Mammary epithelial cell (primary cell): ENCODE measurements at regions of chr7 and their contacts with region 1.

Region 1: DNA sequence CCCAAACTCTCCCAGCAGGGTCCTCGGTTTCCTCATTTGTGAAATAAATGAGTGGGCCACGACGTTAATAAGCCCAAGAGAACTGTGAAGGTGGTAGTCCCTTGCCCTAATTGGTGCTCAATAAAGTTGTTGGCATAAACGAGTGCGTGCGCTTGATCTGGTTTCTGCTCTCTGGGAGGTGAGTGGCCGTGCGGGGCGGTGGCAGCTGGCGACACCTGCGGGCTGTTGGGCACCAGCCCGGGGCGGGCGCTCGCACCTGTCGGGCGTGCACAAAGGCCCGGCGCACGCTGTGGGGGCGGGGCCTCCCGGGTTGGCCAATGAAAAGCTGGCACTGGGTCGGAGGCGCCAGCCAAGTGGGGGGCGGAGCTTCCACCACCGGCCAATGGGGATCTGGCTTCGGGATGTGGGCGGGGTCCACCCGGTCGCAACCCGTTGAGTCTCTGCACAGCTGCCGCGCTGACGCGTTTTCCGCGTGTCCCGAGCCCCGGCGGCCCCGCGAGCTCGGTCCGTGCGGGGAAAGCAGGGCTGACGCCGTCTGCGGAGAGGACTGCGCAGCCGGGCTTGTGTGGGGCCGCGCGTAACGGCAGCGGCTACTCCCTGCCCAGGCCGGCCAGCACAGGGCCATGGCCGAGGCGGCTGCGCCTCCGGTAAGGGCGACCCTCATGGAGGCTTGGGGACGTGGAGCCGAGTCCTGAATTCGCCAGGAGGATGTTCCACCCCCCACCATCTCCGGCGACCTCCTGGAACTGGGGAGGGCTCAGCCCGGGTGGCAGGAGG is 23.0 kb downstream of the ZNF783 start:
- DNase-seq: peak; percentile 75
- H3K4me3 ChIP-seq: peak overlapping the region; percentile 17 to 53 (median 52)
- H3K27ac ChIP-seq: no peak overlapping the region
- H3K4me1 ChIP-seq: peaks cover 7% of the 10 kb centered on the region
- H3K27me3 ChIP-seq: no peaks in the 10 kb centered on the region
- CTCF ChIP-seq: no peak

Region 2: GRCh38 chr7:149229526-149229925 is 55.5 kb before region 1 on chr7:
- CTCF ChIA-PET with region 1: no interaction called
- dilution Hi-C with region 1: no loop called
- in situ Hi-C with region 1: no loop called
- intact Hi-C with region 1: no loop called
- DNase-seq: no peak
- H3K4me3 ChIP-seq: no peak overlapping the region
- H3K27ac ChIP-seq: no peak overlapping the region
- H3K4me1 ChIP-seq: peaks cover 19% of the 10 kb centered on the region
- H3K27me3 ChIP-seq: no peaks in the 10 kb centered on the region
- CTCF ChIP-seq: no peak

Region 3: DNA sequence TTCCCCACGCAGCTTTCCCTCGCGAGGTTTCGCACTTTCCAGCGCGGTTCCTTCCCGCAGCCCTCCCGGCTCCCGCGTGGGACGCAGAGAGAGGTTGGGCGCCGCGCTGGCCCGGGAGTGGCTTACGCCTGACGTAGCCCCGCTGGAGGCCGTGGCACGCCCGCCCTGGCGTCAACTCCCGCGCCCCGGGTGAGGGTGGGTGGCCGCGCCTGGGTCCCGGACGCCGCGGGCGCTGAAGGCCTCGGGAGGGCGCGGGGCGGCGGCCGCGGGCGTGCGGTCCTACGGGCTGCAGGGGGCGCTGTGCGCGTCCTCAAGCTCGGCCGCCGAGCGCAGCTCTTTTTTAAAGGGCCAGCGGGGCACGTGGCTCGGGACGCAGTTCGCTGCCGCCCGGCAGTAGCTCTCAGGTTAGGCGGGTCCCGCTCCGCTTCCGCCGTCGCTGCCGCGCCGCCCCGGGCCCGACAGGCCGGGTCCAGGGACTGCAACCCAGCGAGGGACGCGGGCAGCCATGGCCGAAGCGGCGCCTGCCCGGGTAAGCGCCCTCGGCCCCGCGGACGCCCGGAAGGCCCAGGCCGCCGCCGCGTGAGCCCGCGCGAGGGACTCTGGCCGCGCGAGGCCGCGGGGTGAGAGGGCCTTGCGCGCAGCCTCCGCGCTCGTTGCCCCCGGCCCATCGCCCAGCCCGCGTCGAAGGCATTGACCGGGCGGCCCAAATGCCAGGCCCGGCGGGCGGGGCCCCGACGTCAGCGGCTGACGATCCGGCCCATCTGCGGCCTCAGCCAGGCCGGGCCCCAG is 23.0 kb before region 1 on chr7 and contains the start of gene ZNF783:
- CTCF ChIA-PET with region 1: interaction called, 15 read pairs
- dilution Hi-C with region 1: no loop called
- in situ Hi-C with region 1: no loop called
- intact Hi-C with region 1: no loop called
- DNase-seq: peak; percentile 77
- H3K4me3 ChIP-seq: peak within 1 kb of the TSS; percentile 53 to 70 (median 67)
- H3K27ac ChIP-seq: peak within 1 kb of the TSS; percentile 65
- H3K4me1 ChIP-seq: peaks cover 25% of the 10 kb centered on the region
- H3K27me3 ChIP-seq: no peaks in the 10 kb centered on the region
- CTCF ChIP-seq: peak; percentile 46 to 66
- total RNA-seq, gene ZNF783: 11.7 to 14.5 TPM